Heart left ventricle (tissue), 16 donors: ENCODE measurements at regions of chr6 and their contacts with region 1.

Region 1: DNA sequence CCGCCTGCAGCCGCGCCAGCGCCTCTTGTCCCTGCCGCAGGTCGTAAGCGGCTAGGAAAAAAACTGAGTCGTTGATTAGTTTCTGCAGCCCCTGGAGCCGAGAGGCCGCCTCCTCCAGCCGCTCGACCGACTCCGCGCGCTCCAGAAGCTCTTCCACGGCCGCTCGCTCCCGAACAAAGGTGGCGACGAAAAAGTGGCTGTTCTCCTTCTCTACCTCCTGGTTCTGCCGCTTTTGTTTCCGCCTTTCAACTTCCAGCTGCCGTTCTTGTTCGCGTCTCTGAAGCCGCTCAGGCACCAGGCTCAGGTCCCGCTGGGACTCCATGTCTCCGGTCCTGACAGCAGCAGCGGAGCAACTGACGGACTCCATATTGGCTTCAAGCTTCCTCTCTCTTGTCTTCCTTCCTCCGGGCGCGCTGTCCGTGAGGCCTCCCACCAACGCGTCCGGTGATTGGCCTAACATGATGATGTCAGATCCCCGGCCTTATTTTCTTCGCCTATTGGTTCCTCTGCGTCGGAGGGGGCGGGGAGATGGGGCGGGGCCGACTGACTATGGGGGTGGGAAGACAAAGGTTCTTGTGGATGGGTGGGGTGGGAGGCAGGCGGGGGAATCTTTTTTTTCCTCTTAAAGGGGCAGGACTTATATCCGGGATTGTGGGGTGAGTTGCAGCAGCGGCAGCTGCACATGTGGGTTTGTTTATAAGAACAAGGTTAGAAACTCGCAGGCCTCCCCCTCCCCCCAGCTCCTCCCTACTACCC is at the start of gene TBCC:
- DNase-seq: peak; percentile 96 to 97 (median 97)
- ATAC-seq: peak; percentile 94 to 96 (median 95)
- H3K4me3 ChIP-seq: peak within 1 kb of the TSS; percentile 75 to 99 (median 96)
- H3K27ac ChIP-seq: peak within 1 kb of the TSS; percentile 85 to 97 (median 94)
- H3K4me1 ChIP-seq: peaks cover 0 to 37% (median 24%) of the 10 kb centered on the region in 12 donors
- H3K27me3 ChIP-seq: no peaks in the 10 kb centered on the region
- CTCF ChIP-seq: no peak
- POLR2A ChIP-seq: peak; percentile 79 to 93
- total RNA-seq, gene TBCC: 10.4 to 21.7 (median 15.4) TPM

Region 2: DNA sequence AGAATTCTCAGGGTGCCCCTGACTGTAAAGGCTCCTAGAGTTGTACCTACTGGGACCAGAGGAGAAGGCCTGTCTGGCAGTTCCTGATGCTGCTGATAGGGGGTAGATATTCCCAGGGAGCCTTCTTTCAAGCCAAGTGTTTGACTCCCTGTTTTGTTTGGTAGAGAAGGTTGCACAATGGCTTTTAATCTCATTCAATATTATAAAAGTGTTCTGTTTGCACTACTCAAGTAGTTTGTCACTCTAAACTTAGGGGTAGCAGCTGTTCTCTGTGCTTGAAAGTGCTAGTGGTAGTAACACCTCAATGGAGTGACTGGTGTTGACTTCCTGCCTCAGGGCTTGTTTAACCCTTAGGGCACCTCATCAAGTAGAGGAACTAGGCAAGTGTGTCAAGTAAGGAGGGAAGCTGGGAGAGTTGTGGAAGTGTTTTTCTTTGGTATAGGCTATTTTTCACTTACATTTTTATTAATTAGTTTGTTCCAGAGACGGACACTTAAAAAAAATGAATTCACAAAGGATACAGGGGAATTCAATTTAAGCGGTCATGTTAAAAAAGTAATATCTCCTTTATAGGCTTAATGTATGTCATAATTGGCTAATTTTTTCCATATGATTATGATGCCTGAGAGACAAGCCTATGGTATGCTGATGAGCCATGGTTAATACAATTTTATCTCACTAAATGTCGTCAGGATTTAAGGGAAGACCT is 74.1 kb after region 1 on chr6:
- intact Hi-C with region 1: loop called in 1 of 10 experiments (anchors 2 kb)
- DNase-seq: no peak
- ATAC-seq: peak in 2 of 4 donors; percentile 56 to 58
- H3K4me3 ChIP-seq: peak overlapping the region in 2 of 12 donors; percentile 20 to 39
- H3K27ac ChIP-seq: peak overlapping the region in 10 of 12 donors; percentile 47 to 79 (median 60)
- H3K4me1 ChIP-seq: peaks cover 0 to 30% (median 17%) of the 10 kb centered on the region in 12 donors
- H3K27me3 ChIP-seq: no peaks in the 10 kb centered on the region
- CTCF ChIP-seq: peak in 2 of 12 donors; percentile 16 to 25
- POLR2A ChIP-seq: no peak

Region 3: GRCh38 chr6:42879372-42880239 is 133.7 kb after region 1 on chr6 and contains the start of gene RPL7L1:
- intact Hi-C with region 1: loop called in 5 of 10 experiments (anchors 1 to 5 kb)
- DNase-seq: peak; percentile 84 to 91 (median 85)
- ATAC-seq: peak; percentile 98 to 99 (median 98)
- H3K4me3 ChIP-seq: peak within 1 kb of the TSS; percentile 24 to 84 (median 76)
- H3K27ac ChIP-seq: peak within 1 kb of the TSS; percentile 82 to 99 (median 92)
- H3K4me1 ChIP-seq: peaks cover 0 to 34% (median 15%) of the 10 kb centered on the region in 12 donors
- H3K27me3 ChIP-seq: no peaks in the 10 kb centered on the region
- CTCF ChIP-seq: peak in 3 of 12 donors; percentile 7 to 28 (median 21)
- POLR2A ChIP-seq: peak in 1 of 2 donors; percentile 38
- total RNA-seq, gene RPL7L1: 39.8 to 71.1 (median 49.2) TPM

Region 4: GRCh38 chr6:43096451-43097097 is 350.7 kb after region 1 on chr6:
- intact Hi-C with region 1: no loop called
- DNase-seq: no peak
- ATAC-seq: peak in 1 of 4 donors; percentile 27
- H3K4me3 ChIP-seq: no peak overlapping the region
- H3K27ac ChIP-seq: no peak overlapping the region
- H3K4me1 ChIP-seq: peaks cover 0 to 20% (median 3%) of the 10 kb centered on the region in 12 donors
- H3K27me3 ChIP-seq: no peaks in the 10 kb centered on the region
- CTCF ChIP-seq: no peak
- POLR2A ChIP-seq: no peak